HCT116 (cell line): ENCODE measurements at regions of chr11 and their contacts with region 1.

Region 1: GRCh38 chr11:35714882-35715627 is 52.5 kb downstream of the TRIM44 start:
- DNase-seq: no peak
- ATAC-seq: no peak
- H3K4me3 ChIP-seq: no peak overlapping the region
- H3K27ac ChIP-seq: no peak overlapping the region
- H3K4me1 ChIP-seq: no peaks in the 10 kb centered on the region
- H3K27me3 ChIP-seq: no peaks in the 10 kb centered on the region
- CTCF ChIP-seq: no peak
- POLR2A ChIP-seq: no peak
- RAD21 ChIP-seq: no peak

Region 2: DNA sequence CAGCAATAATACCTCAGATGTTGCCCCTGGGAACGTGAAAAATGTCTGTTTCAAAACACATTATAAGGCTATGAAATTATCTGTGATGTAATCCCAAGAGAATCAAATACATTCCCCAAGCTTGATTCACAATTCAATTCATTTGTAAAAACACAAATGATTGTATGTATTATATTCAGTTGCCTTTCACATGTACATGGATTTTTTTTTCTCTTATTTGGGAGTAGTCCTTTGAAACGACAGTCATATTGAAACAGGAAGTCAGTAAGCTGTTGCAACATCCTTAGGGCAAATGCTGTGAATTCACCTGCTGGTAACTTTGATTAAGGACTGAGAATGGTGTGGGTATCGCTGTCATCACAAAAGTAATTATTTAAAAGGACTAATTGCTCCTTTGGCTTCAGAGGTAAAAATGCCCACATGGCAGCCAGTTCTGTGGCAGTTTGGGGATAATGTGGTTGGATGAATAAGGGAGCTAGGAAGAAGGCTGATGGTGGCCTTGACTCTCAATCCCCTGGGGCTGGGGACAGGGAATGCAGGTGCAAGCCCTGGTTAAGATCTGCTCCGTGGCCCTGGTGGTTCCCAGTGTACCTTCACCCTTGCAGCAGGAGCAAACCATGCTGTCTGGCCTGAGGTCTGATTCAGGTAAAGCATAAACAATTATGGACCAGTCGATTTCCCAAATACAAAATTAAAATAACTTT is 1080.9 kb before region 1 on chr11:
- CTCF ChIA-PET with region 1: no interaction called
- POLR2A ChIA-PET with region 1: no interaction called
- RAD21 ChIA-PET with region 1: no interaction called
- intact Hi-C with region 1: no loop called
- DNase-seq: no peak
- ATAC-seq: peak; percentile 49; the same call in 1 of the 2 replicates
- H3K4me3 ChIP-seq: no peak overlapping the region
- H3K27ac ChIP-seq: peak overlapping the region; percentile 52
- H3K4me1 ChIP-seq: peaks cover 26 to 97% of the 10 kb centered on the region in 2 experiments
- H3K27me3 ChIP-seq: no peaks in the 10 kb centered on the region
- CTCF ChIP-seq: peak in 1 of 3 experiments; percentile 14; a peak in 1 of 6 replicates
- POLR2A ChIP-seq: no peak
- RAD21 ChIP-seq: no peak

Region 3: DNA sequence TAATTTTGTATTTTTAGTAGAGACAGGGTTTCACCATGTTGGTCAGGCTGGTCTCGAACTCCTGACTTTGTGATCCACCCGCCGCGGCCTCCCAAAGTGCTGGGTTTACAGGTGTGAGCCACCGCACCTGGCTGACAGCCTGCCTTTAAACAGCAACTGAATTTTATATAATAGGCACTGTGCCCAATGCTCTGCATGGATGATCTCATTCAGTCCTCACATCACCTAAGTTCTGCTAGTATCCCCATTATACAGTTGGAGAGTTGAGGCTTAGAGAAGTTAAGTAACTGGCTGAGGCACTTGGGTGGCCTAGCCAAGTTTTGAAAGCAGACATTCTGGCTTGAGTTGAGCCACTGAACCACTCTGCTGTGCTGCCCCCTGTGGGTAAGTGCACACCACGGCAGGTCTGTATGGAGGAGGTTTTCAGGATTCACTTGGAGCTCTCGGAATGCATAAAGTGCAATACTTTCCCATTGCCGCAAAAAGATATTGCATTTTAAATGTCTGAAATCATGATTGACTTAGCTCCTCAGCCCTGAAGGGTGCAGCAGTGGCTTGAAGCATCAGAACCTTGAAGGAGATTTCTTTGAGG is 341.2 kb after region 1 on chr11:
- CTCF ChIA-PET with region 1: no interaction called
- POLR2A ChIA-PET with region 1: no interaction called
- RAD21 ChIA-PET with region 1: no interaction called
- intact Hi-C with region 1: loop called (anchors 10 kb)
- DNase-seq: no peak
- ATAC-seq: peak; percentile 84
- H3K4me3 ChIP-seq: no peak overlapping the region
- H3K27ac ChIP-seq: no peak overlapping the region
- H3K4me1 ChIP-seq: no peaks in the 10 kb centered on the region
- H3K27me3 ChIP-seq: no peaks in the 10 kb centered on the region
- CTCF ChIP-seq: peak; percentile 45 to 91 (median 81); a peak in 5 of 6 replicates
- POLR2A ChIP-seq: no peak
- RAD21 ChIP-seq: peak; percentile 67

Region 4: GRCh38 chr11:36149538-36150242 is 434.6 kb after region 1 on chr11:
- CTCF ChIA-PET with region 1: no interaction called
- POLR2A ChIA-PET with region 1: no interaction called
- RAD21 ChIA-PET with region 1: no interaction called
- intact Hi-C with region 1: loop called (anchors 10 kb)
- DNase-seq: peak; percentile 99
- ATAC-seq: peak; percentile 93
- H3K4me3 ChIP-seq: peak overlapping the region in 1 of 2 experiments; percentile 33; a peak in 2 of 4 replicates
- H3K27ac ChIP-seq: peak overlapping the region; percentile 81
- H3K4me1 ChIP-seq: peaks cover 22 to 45% of the 10 kb centered on the region in 2 experiments
- H3K27me3 ChIP-seq: no peaks in the 10 kb centered on the region
- CTCF ChIP-seq: peak; percentile 73 to 83 (median 80)
- POLR2A ChIP-seq: no peak
- RAD21 ChIP-seq: peak; percentile 83

Region 5: DNA sequence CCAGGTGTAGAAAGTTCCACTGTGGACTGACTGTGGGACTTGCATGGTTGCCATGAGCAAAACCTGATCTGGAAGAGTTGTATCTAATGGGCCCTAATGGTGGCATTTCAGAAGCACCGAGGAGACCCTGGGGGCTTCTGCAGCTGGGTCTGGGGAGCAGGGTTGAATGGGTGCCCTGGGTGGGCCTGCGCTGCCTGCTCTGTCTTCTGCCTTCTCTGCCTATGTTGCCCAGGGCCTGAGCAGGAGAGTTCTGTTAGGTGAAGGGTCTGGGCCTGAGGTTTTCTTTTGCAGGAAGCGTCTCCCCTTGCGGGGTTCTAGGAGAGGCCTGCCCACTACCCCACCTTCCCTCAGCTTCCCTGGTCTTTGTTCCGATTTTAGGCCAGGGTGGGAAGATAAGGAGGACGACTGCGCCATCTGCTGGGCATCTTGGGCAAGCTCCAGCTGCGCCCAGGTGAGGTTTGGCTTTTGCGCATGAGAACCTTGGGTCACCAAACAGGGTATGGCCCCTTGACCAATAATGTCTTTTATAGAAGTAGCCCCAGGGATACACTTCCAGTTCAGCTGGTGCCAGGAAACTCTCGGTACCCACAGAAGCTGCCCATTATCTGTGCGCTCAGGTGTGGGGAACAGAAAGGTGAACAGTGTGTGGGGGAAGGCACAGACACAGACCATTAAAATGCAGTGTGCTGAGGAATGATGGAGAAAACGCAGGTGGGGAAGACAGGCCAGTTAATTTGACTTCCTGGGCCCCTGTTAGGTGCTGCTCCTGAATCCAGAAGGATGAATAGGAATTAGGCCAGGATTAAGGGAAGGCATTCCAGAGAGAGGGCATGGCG is 551.0 kb after region 1 on chr11:
- CTCF ChIA-PET with region 1: no interaction called
- POLR2A ChIA-PET with region 1: no interaction called
- RAD21 ChIA-PET with region 1: no interaction called
- intact Hi-C with region 1: loop called (anchors 5 kb)
- DNase-seq: peak; percentile 19
- ATAC-seq: peak; percentile 96
- H3K4me3 ChIP-seq: no peak overlapping the region
- H3K27ac ChIP-seq: no peak overlapping the region
- H3K4me1 ChIP-seq: no peaks in the 10 kb centered on the region
- H3K27me3 ChIP-seq: no peaks in the 10 kb centered on the region
- CTCF ChIP-seq: peak; percentile 79 to 94 (median 82)
- POLR2A ChIP-seq: no peak
- RAD21 ChIP-seq: peak; percentile 94